ENCODE measurements at regions of chr6 and their contacts with region 1.

Region 1: GRCh38 chr6:16805243-16805950 is 44.1 kb upstream of the ATXN1 start:
- DNase-seq: no peak
- ATAC-seq: no peak
- H3K4me3 Mint-ChIP-seq: no peak overlapping the region
- H3K27ac Mint-ChIP-seq: no peak overlapping the region
- H3K4me1 Mint-ChIP-seq: peaks cover 16% of the 10 kb centered on the region
- H3K27me3 Mint-ChIP-seq: no peaks in the 10 kb centered on the region
- CTCF ChIP-seq: no peak

Region 2: DNA sequence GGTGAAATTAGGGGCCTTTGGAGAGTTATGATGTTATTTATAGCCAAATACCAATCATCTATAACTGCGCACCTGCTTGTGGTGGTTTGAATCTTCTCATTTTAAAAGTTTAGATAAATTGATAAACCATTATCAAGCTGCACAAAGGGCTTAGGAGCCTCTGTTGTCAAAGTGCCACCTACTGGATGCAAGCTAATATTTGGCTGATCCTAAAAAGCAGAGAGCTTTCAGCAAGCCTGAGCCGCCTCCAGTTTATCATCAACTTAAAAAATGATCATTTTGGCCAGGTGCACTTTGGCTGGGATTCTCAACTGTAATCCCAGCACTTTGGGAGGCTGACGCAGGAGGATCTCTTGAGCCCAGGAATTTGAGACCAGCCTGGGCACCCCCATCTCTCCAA is 14.4 kb after region 1 on chr6:
- CTCF ChIA-PET with region 1: interaction called, 11 read pairs
- POLR2A ChIA-PET with region 1: interaction called, 3 read pairs
- intact Hi-C with region 1: no loop called
- DNase-seq: no peak
- ATAC-seq: no peak
- H3K4me3 Mint-ChIP-seq: no peak overlapping the region
- H3K27ac Mint-ChIP-seq: no peak overlapping the region
- H3K4me1 Mint-ChIP-seq: peaks cover 3% of the 10 kb centered on the region
- H3K27me3 Mint-ChIP-seq: peaks cover 13% of the 10 kb centered on the region
- CTCF ChIP-seq: no peak